ENCODE measurements at regions of chr17 and their contacts with region 1.

Region 1: DNA sequence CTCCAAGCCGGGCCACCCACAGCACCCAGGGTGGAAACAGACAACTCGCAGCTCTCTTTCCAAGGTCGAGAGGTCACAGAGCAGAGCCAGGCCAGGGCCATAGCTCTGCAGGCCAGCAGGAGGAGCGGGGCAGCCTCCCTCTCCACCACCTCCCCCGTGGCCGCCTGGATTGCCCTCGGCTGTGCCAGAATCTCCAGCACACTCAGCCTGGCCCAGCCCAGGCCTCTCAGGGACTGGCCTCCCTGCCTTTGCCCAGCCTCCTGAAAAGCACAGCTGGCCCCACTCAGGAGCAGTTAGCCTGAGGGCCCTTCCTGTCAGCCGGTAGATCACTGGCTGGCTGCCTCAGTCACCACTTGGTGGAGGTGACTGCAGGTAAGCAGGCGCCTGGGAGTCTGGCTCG is 85.8 kb upstream of the SEC14L1 start:
- DNase-seq: no peak
- ATAC-seq: no peak
- H3K4me3 ChIP-seq: no peak overlapping the region
- H3K4me3 Mint-ChIP-seq: no peak overlapping the region
- H3K27ac ChIP-seq: no peak overlapping the region
- H3K27ac Mint-ChIP-seq: no peak overlapping the region
- H3K4me1 ChIP-seq: no peaks in the 10 kb centered on the region
- H3K4me1 Mint-ChIP-seq: peaks cover 2% of the 10 kb centered on the region
- H3K27me3 ChIP-seq: peaks cover 0 to 7% of the 10 kb centered on the region in 2 experiments
- H3K27me3 Mint-ChIP-seq: peaks cover 22% of the 10 kb centered on the region
- CTCF ChIP-seq: no peak

Region 2: DNA sequence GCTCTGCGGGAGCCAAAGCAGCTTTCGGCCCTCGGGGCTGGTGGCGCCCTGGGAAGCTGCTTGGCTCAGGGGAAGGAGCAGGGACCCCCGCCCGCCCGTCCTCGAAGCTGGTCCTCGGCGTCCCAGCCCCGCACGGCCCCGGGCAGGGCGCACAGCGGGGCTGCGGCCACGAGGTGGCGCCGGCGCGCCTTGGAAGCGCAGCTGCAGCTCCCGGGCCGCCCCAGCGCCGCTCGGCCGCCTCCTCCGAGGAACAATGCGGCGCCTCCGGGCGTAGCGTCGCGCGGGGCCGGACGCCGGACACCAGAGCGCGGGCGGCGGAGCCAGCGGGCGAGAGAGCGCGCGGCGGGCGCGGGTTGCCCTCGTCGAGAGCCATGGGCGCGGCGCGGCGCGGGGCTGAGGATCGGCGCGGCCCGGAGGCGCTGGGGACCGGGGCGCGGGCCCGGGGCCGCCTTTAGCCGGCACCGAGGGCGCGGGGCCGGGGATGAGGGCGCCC is 186.7 kb before region 1 on chr17 and contains the start of gene MGAT5B:
- CTCF ChIA-PET with region 1: interaction called, 186 read pairs
- POLR2A ChIA-PET with region 1: interaction called, 9 read pairs
- intact Hi-C with region 1: loop called in 1 of 2 experiments (anchors 1 kb)
- DNase-seq: peak; percentile 49 to 89 (median 74)
- ATAC-seq: peak; percentile 92
- H3K4me3 ChIP-seq: peak within 1 kb of the TSS in 1 of 2 experiments; percentile 39
- H3K4me3 Mint-ChIP-seq: peak within 1 kb of the TSS; percentile 76
- H3K27ac ChIP-seq: no peak within 1 kb of the TSS
- H3K27ac Mint-ChIP-seq: no peak within 1 kb of the TSS
- H3K4me1 ChIP-seq: peaks cover 10% of the 10 kb centered on the region
- H3K4me1 Mint-ChIP-seq: peaks cover 5% of the 10 kb centered on the region
- H3K27me3 ChIP-seq: peaks cover 12 to 18% of the 10 kb centered on the region in 2 experiments
- H3K27me3 Mint-ChIP-seq: peaks cover 19% of the 10 kb centered on the region
- CTCF ChIP-seq: peak; percentile 69
- total RNA-seq, gene MGAT5B: 0.24 to 0.36 TPM

Region 3: DNA sequence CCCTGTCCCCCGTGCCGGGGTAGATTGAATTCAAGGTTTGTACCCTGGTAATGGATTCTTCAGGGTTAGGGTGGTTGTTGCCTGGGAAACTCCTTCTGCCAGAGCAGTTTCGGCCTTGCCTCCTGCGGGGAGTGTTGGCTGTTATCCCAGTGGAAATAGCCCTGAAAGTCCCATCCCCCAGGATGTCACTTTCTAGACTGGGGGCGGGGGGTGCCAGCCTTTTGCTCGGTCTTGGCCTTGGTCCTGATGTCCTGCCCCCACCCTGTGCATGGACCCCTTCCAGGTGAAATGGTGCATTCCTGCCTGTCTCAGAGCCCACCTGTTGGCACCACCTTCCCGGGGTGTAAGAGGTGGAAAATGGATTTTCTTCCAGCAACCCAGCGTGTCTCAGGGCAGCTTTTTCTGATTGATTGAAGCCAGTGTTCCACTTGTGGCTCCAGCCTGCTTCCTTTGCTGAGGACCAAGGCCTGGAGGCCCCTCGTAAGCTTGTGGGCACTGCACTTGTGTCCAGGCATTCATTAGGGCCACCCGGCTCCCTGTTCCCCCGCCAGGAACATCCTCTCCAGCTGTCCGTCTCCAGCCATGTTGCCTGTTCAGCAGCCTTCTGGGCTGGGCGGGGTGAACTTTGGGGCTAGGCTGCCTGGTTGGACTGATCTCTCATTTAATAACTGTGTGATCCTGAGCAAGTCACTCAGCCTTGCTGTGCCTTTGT is 161.2 kb before region 1 on chr17:
- CTCF ChIA-PET with region 1: interaction called, 10 read pairs
- POLR2A ChIA-PET with region 1: no interaction called
- intact Hi-C with region 1: no loop called
- DNase-seq: no peak
- ATAC-seq: no peak
- H3K4me3 ChIP-seq: no peak overlapping the region
- H3K4me3 Mint-ChIP-seq: no peak overlapping the region
- H3K27ac ChIP-seq: no peak overlapping the region
- H3K27ac Mint-ChIP-seq: no peak overlapping the region
- H3K4me1 ChIP-seq: no peaks in the 10 kb centered on the region
- H3K4me1 Mint-ChIP-seq: no peaks in the 10 kb centered on the region
- H3K27me3 ChIP-seq: no peaks in the 10 kb centered on the region
- H3K27me3 Mint-ChIP-seq: no peaks in the 10 kb centered on the region
- CTCF ChIP-seq: no peak

Region 4: GRCh38 chr17:77011173-77012011 is 43.5 kb before region 1 on chr17:
- CTCF ChIA-PET with region 1: interaction called, 16 read pairs
- POLR2A ChIA-PET with region 1: interaction called, 3 read pairs
- intact Hi-C with region 1: loop called (anchors 1 kb)
- DNase-seq: peak; percentile 20 to 69 (median 56)
- ATAC-seq: no peak
- H3K4me3 ChIP-seq: no peak overlapping the region
- H3K4me3 Mint-ChIP-seq: no peak overlapping the region
- H3K27ac ChIP-seq: no peak overlapping the region
- H3K27ac Mint-ChIP-seq: no peak overlapping the region
- H3K4me1 ChIP-seq: no peaks in the 10 kb centered on the region
- H3K4me1 Mint-ChIP-seq: peaks cover 2% of the 10 kb centered on the region
- H3K27me3 ChIP-seq: no peaks in the 10 kb centered on the region
- H3K27me3 Mint-ChIP-seq: no peaks in the 10 kb centered on the region
- CTCF ChIP-seq: peak; percentile 81

Region 5: GRCh38 chr17:77153472-77153871 is 98.5 kb after region 1 on chr17:
- CTCF ChIA-PET with region 1: no interaction called
- POLR2A ChIA-PET with region 1: no interaction called
- intact Hi-C with region 1: no loop called
- DNase-seq: no peak
- ATAC-seq: no peak
- H3K4me3 ChIP-seq: no peak overlapping the region
- H3K4me3 Mint-ChIP-seq: no peak overlapping the region
- H3K27ac ChIP-seq: no peak overlapping the region
- H3K27ac Mint-ChIP-seq: peak overlapping the region; percentile 14
- H3K4me1 ChIP-seq: no peaks in the 10 kb centered on the region
- H3K4me1 Mint-ChIP-seq: peaks cover 53% of the 10 kb centered on the region
- H3K27me3 ChIP-seq: no peaks in the 10 kb centered on the region
- H3K27me3 Mint-ChIP-seq: no peaks in the 10 kb centered on the region
- CTCF ChIP-seq: no peak